Activated CD4-positive, alpha-beta T cell treated with anti-CD3 and anti-CD28 coated beads, Interleukin-2, amount 10 ng/mL, durations not matched to agents 24 days and 14 days (primary cell): ENCODE measurements at regions of chr15 and their contacts with region 1.

Region 1: DNA sequence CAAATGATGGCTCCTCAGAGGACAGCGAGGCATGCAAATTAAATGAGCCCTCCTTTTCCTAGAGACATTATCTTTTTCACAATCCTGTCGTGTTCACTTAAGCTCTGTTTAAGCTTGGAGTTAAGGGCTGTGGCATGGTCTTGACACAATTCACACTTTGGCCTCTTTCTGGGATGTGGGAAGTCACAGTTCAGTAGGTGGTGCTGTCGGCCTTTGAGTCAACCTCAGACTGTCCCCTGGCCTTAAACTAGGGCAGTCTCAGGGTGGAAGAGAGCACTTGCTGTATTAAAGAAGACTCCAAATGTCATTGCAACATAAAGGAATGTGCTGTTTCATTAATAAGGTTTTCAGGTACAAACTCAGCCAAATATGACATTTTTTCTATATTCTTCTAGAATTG is 351.0 kb downstream of the MCTP2 start:
- DNase-seq: peak; percentile 86
- H3K4me3 Mint-ChIP-seq: no peak overlapping the region
- H3K27ac Mint-ChIP-seq: no peak overlapping the region
- H3K4me1 Mint-ChIP-seq: peaks cover 44% of the 10 kb centered on the region
- H3K27me3 Mint-ChIP-seq: peaks cover 75% of the 10 kb centered on the region

Region 2: GRCh38 chr15:94163999-94164807 is 418.2 kb before region 1 on chr15:
- intact Hi-C with region 1: loop called (anchors 10 kb)
- DNase-seq: peak; percentile 90
- H3K4me3 Mint-ChIP-seq: no peak overlapping the region
- H3K27ac Mint-ChIP-seq: no peak overlapping the region
- H3K4me1 Mint-ChIP-seq: peaks cover 5% of the 10 kb centered on the region
- H3K27me3 Mint-ChIP-seq: peaks cover 28% of the 10 kb centered on the region

Region 3: DNA sequence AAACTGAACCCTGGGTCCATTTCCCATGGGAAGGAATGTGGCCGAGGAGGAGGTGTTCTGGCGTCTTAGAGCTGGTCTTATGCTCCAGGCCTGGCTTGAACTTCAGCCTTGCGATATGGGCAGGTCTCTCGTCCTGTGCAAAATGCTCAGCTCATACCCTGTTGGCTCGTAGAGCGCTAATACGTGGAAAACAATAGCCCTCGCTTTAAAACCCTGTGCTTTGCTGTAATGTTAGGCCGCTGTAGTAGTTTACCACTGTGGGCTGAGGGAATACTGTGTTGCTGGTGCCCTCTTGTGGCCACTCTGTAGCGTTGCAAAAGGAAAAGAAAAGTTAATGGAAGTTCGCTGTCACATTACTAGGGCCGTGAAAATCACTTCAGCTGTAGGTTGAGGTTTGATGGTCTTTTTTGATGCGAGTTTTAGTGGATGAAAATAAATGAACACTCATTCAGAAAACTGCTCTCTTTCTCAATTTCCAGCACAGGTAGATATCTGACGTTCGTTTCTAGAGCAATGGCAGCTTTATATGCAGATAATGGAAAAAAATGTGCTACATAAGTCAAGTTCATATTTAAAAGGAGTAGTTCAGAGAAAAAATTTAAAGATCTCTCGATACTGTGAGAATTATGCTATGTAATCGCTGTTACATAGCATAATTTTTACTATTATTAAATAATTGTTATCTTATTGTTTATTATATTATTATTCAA is 258.1 kb before region 1 on chr15:
- intact Hi-C with region 1: loop called (anchors 10 kb)
- DNase-seq: peak; percentile 86
- H3K4me3 Mint-ChIP-seq: peak overlapping the region; percentile 28
- H3K27ac Mint-ChIP-seq: no peak overlapping the region
- H3K4me1 Mint-ChIP-seq: peaks cover 25% of the 10 kb centered on the region
- H3K27me3 Mint-ChIP-seq: no peaks in the 10 kb centered on the region

Region 4: DNA sequence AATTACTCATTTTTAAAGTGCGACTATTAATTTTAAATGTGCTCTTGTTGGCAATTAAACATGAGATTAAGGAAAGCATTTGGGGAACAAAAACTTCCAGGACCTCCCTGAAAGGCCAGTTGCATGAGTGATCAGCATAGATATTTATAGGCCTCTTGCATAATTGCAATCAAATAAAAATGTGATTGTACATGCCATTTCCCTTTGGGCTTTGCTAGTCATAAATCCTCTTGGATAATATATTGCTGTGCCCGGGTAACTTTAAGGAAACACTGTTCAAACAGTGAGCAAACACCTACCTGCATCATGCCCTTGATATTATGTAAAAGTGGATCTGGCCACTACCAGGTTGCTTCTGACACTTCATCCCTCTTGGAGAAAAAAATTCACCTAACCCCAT is 111.9 kb before region 1 on chr15:
- intact Hi-C with region 1: no loop called
- DNase-seq: no peak
- H3K4me3 Mint-ChIP-seq: no peak overlapping the region
- H3K27ac Mint-ChIP-seq: no peak overlapping the region
- H3K4me1 Mint-ChIP-seq: peaks cover 1% of the 10 kb centered on the region
- H3K27me3 Mint-ChIP-seq: no peaks in the 10 kb centered on the region

Region 5: GRCh38 chr15:94610069-94610468 is 27.7 kb after region 1 on chr15:
- intact Hi-C with region 1: loop called (anchors 1 kb)
- DNase-seq: peak; percentile 69
- H3K4me3 Mint-ChIP-seq: no peak overlapping the region
- H3K27ac Mint-ChIP-seq: no peak overlapping the region
- H3K4me1 Mint-ChIP-seq: peaks cover 44% of the 10 kb centered on the region
- H3K27me3 Mint-ChIP-seq: peaks cover 64% of the 10 kb centered on the region

Region 6: DNA sequence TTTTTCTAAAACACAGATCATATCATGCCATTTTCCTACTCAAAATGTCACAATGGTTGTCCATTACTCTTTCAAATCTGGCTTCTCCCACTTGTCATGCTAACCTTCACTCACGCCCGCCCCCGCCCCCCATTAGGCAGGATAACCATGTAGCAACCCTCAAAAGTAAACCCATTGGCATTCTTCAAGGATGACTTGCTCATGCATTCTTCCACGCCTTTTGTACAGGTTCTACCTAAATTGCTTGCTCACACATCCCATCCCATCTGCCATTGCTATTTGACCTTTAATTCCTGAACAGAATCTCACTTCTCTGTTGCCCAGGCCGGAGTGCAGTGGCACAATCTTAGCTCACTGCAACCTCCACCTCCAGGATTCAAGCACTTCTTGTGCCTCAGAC is 38.3 kb after region 1 on chr15:
- intact Hi-C with region 1: no loop called
- DNase-seq: no peak
- H3K4me3 Mint-ChIP-seq: no peak overlapping the region
- H3K27ac Mint-ChIP-seq: no peak overlapping the region
- H3K4me1 Mint-ChIP-seq: peaks cover under 1% of the 10 kb centered on the region
- H3K27me3 Mint-ChIP-seq: peaks cover 19% of the 10 kb centered on the region

Region 7: GRCh38 chr15:94670438-94671034 is 88.2 kb after region 1 on chr15:
- intact Hi-C with region 1: loop called (anchors 5 kb)
- DNase-seq: no peak
- H3K4me3 Mint-ChIP-seq: no peak overlapping the region
- H3K27ac Mint-ChIP-seq: no peak overlapping the region
- H3K4me1 Mint-ChIP-seq: no peaks in the 10 kb centered on the region
- H3K27me3 Mint-ChIP-seq: peaks cover 45% of the 10 kb centered on the region

Region 8: DNA sequence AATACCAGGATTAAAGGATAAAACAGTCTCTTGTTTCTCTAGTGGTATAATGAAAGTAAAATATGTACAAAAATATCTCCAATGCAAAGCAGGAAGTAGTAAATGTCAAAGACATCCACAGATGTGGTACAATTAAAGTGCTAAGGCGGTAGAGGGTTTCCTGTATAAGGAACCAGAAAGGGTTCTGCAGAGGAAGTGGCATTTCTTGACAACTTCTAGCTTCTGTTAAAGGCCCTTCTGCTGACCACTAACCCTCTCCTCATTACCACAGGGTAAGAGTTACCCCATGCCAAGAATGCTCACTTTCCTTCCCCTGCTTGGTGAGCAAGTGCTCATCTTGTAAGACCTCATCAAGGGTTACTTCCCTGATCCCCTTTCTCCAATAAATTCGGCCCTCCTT is 864.5 kb after region 1 on chr15:
- intact Hi-C with region 1: loop called (anchors 10 kb)
- DNase-seq: peak; percentile 84
- H3K4me3 Mint-ChIP-seq: peak overlapping the region; percentile 52
- H3K27ac Mint-ChIP-seq: peak overlapping the region; percentile 48
- H3K4me1 Mint-ChIP-seq: peaks cover 26% of the 10 kb centered on the region
- H3K27me3 Mint-ChIP-seq: peaks cover 8% of the 10 kb centered on the region